A673 (cell line): ENCODE measurements at regions of chr7 and their contacts with region 1.

Region 1: GRCh38 chr7:87886875-87887274 is 10.6 kb downstream of the DBF4 start:
- DNase-seq: peak; percentile 55
- H3K4me3 ChIP-seq: no peak overlapping the region
- H3K27ac ChIP-seq: no peak overlapping the region
- H3K4me1 ChIP-seq: no peaks in the 10 kb centered on the region
- H3K27me3 ChIP-seq: no peaks in the 10 kb centered on the region
- CTCF ChIP-seq: peak; percentile 54; the same call in 1 of the 2 replicates

Region 2: DNA sequence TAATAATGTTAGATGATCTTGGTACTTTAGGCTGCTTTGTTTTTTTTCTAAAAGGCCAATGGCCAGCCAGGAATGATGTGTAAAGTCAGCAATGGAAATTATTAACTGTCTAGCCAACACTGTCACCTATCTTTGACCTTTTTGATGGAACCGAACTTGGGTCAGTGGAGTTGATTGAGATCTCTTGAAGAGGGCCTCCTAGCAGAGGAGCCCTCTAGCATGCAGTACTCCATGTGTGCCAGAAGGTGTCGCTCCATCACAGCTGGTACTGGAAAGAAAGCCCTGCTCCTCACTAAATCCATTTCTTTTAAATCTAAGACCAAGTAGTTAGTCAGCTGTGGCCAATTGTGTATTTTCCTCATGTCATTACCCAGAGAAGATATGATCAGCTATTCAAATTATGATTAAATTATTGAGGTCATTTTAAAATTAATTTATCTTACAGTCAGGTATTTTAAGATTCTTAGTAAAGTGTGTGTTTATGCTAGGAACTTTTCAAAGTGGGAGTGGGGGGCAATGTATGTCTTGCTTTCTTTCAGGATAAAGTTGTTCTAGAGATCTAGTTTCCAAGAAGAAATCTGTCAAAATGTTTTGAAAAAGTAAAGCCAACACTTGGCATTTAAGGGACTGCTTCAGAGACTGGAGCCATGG is 574.5 kb before region 1 on chr7:
- CTCF ChIA-PET with region 1: no interaction called
- POLR2A ChIA-PET with region 1: no interaction called
- intact Hi-C with region 1: loop called (anchors 10 kb)
- DNase-seq: peak; percentile 60
- H3K4me3 ChIP-seq: no peak overlapping the region
- H3K27ac ChIP-seq: no peak overlapping the region
- H3K4me1 ChIP-seq: no peaks in the 10 kb centered on the region
- H3K27me3 ChIP-seq: no peaks in the 10 kb centered on the region
- CTCF ChIP-seq: peak; percentile 97

Region 3: DNA sequence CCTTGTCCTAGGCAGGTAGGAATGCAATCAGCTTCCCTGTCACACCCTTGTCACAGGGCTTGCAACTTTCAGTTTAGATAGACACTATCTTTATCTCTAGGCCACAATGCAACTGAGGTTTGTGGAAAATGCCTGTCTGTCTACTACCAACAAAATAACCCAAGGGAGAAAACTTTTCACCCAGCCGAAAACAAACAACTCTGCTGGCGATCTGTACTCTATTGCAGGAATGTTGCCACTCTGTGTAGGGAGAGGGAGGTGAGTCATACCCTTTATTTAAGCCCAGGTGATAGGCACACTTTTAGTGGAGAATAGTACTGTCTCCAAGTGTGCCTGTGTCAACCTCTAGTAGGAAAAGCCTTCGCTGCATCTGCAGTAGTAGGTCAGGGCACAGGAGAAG is 119.1 kb before region 1 on chr7:
- CTCF ChIA-PET with region 1: no interaction called
- POLR2A ChIA-PET with region 1: no interaction called
- intact Hi-C with region 1: no loop called
- DNase-seq: no peak
- H3K4me3 ChIP-seq: no peak overlapping the region
- H3K27ac ChIP-seq: no peak overlapping the region
- H3K4me1 ChIP-seq: no peaks in the 10 kb centered on the region
- H3K27me3 ChIP-seq: no peaks in the 10 kb centered on the region
- CTCF ChIP-seq: no peak

Region 4: DNA sequence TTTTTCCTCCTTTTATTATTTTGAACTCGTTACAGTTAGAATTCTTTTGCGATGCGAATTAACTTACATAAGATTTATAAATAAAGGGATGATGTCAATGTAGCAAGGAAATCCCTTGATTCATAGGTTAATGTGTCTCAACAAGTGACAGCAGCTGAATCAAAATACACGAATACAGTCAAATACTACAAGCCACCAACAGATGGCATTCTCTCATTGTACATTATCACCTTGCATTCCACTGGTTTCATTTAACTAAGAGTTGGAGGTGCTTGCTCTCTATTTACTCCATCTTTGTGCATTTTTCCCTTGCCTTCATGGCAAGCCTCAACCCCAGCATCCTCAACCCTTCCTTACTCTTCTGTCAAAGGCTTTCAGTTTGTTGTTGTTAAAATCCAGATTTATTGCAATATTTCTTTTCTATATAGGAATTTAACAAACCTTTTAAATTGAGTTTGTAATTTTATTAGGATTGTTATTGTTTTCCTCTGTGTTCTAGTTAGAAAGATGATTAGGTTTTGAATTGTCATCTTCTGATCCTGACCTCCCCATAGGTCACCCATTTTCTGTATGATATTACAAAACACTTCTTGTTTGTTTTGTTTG is 89.0 kb before region 1 on chr7:
- CTCF ChIA-PET with region 1: interaction called, 4 read pairs
- POLR2A ChIA-PET with region 1: no interaction called
- intact Hi-C with region 1: loop called (anchors 2 kb)
- DNase-seq: peak; percentile 63
- H3K4me3 ChIP-seq: no peak overlapping the region
- H3K27ac ChIP-seq: no peak overlapping the region
- H3K4me1 ChIP-seq: no peaks in the 10 kb centered on the region
- H3K27me3 ChIP-seq: no peaks in the 10 kb centered on the region
- CTCF ChIP-seq: peak; percentile 70

Region 5: DNA sequence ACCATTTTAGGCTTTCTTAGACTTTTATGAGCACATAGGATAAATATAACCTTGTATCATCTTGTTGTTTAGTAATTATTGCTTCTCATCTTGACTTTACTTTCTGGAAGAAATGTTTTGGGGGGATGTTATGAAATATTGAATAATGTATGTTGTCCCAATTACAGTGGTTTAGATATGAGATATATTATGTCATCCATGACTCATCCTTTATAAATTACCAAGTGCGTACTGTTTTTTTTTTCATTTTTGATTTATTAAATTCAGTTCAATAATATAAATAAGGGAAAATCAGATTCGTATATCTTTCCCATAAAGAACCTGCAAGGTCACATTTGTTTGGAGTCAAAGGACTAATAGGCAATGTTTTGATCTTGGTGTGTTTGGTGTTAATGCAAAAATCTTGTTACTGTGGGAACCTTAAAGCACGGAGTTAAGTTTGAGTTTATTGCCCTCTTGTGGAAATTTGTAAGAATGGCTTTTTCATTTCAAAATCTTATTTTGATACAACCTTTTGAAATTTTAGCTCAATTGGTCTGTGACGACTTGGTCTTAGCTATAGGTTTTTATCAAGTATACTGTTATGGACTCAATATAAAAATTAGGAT is 224.4 kb after region 1 on chr7:
- CTCF ChIA-PET with region 1: interaction called, 3 read pairs
- POLR2A ChIA-PET with region 1: no interaction called
- intact Hi-C with region 1: loop called (anchors 5 kb)
- DNase-seq: peak; percentile 57
- H3K4me3 ChIP-seq: no peak overlapping the region
- H3K27ac ChIP-seq: no peak overlapping the region
- H3K4me1 ChIP-seq: peaks cover under 1% of the 10 kb centered on the region
- H3K27me3 ChIP-seq: no peaks in the 10 kb centered on the region
- CTCF ChIP-seq: peak; percentile 71